Activated B cell treated with CpG ODN at 0.5 μM for 24 hours (primary cell): ENCODE measurements at regions of chr22 and their contacts with region 1.

Region 1: DNA sequence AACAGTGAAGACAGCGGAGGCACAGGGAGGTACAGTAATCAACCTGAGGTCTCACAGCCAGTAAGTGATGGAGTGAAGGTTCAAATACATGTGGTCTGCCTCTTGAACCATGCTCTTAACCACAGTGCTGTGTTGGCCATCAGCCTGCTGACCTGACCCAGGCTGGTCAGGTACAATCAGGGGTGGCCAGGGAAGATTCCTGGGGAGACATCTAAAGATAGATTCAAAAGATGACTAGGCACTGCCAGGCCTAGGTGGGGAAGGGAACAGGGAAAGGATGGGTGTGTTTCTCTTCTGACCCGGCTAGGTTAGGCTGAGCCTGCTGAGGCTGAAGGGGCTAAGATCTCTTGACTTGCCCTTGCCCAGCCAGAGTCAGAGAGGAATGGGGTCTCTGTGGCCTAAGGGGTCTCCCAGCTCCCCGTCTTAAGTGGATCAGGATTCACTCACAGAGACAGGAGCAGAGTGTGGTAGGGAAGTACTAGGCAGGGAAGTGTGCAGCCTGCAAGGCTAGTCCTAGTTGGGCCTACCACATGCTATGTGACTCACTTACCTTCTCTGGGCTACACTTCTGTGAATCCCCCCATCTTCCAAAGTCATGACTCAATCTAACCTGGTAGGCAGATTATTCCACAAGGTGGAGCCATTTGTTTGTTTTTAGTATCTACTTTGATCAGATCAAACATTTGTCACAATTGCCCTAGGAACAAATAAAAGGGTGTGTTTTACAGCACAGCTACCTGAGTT is 10.4 kb upstream of the SREBF2 start:
- DNase-seq: no peak
- ATAC-seq: peak; percentile 90
- H3K4me3 Mint-ChIP-seq: no peak overlapping the region
- H3K27ac Mint-ChIP-seq: peak overlapping the region; percentile 26
- H3K4me1 Mint-ChIP-seq: peaks cover 5% of the 10 kb centered on the region
- H3K27me3 Mint-ChIP-seq: no peaks in the 10 kb centered on the region
- CTCF ChIP-seq: no peak

Region 2: DNA sequence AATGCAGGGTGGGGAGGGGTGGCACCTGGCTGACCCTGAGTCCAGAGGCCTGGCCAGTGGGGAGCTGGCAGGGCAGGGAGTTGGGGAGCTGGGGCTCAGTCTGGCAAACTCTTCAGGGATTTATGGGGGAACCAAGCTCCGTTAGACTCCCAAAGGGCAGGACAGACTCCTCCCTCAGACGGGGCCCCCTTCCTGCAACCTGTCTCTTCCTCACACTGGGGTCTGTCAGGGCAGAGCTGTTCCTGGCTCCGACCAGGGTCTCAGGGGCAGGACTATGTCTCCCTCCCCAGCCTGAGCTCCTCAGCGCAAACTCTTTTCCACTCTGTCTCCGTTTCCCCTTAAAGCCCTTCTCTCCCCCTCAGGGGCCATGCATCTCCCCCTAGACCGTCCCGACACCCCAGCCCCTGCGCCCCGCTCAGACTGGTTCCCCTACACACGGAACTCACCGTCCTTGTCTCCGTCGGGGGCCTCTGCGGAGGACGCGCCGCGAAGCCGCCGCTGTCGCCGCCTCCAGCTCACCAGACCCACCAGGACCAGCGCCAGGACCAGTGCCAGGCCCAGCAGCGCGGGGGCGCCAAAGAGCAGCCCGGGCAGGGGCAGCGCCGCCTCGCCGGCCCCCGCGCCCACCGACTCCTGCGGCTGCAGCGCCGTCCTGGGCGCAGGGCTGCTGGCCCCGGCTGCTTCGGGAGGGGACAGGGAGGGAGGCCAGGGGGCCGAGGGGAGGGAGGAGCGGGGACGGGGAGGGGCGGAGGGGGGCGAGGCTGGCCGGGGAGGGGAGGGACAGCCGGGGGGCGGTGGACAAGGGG is 103.4 kb after region 1 on chr22:
- CTCF ChIA-PET with region 1: no interaction called
- POLR2A ChIA-PET with region 1: interaction called, 141 read pairs
- intact Hi-C with region 1: no loop called
- DNase-seq: peak; percentile 90
- ATAC-seq: peak; percentile 45
- H3K4me3 Mint-ChIP-seq: peak overlapping the region; percentile 92
- H3K27ac Mint-ChIP-seq: peak overlapping the region; percentile 94
- H3K4me1 Mint-ChIP-seq: peaks cover 83% of the 10 kb centered on the region
- H3K27me3 Mint-ChIP-seq: no peaks in the 10 kb centered on the region
- CTCF ChIP-seq: peak; percentile 26

Region 3: DNA sequence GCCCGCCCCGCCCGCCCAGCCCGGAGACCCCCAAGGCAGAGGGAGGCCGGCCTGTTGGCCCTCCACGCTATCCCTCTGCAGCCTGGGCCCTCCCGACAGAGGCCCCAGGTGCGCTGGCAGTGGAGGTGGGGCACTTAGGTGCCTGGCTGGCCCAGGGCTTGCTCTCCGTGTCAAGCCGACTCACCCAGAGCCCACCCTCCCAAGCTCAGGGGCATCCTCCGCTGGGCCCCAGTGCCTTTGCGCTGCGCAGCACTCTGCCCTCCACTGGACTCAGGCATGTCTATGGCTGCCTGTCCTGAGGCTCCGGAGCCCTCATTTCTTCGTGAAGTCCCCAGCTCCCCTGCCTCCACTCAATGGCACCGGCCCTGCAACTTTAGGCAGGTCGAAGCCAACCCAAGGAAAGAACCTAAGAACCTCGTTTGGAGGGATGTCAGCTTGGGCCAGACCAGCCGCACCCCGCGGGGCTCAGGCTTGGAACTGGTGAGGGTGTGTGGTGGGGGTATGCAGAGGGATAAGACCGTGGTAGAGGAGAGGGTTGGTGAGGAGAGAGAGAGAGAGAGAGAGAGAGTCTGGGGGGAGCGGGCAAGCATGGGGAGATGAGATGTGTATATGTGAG is 135.6 kb after region 1 on chr22:
- CTCF ChIA-PET with region 1: no interaction called
- POLR2A ChIA-PET with region 1: interaction called, 4 read pairs
- intact Hi-C with region 1: loop called (anchors 1 kb)
- DNase-seq: no peak
- ATAC-seq: no peak
- H3K4me3 Mint-ChIP-seq: no peak overlapping the region
- H3K27ac Mint-ChIP-seq: no peak overlapping the region
- H3K4me1 Mint-ChIP-seq: peaks cover 15% of the 10 kb centered on the region
- H3K27me3 Mint-ChIP-seq: no peaks in the 10 kb centered on the region
- CTCF ChIP-seq: peak; percentile 12

Region 4: DNA sequence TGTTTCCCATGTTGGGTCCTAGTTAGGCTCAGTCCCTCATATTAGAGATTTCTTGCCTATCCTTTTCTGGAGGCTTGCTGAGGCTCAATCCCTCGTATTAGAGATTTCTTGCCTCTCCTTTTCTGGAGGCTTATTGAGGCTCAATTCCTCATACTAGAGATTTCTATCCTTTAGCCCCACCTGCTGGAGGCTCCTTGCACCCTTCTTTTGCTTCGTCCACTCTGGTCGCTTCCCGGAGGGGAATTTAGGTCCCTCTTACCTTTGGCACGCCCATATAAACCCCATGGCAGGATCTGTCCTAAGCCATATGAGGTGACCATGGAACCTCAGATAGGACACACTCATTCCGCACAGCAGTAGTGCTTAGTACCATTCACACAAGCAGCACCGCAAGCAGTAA is 292.2 kb after region 1 on chr22:
- CTCF ChIA-PET with region 1: no interaction called
- POLR2A ChIA-PET with region 1: no interaction called
- intact Hi-C with region 1: loop called (anchors 5 kb)
- DNase-seq: no peak
- ATAC-seq: no peak
- H3K4me3 Mint-ChIP-seq: no peak overlapping the region
- H3K27ac Mint-ChIP-seq: no peak overlapping the region
- H3K4me1 Mint-ChIP-seq: peaks cover 3% of the 10 kb centered on the region
- H3K27me3 Mint-ChIP-seq: no peaks in the 10 kb centered on the region
- CTCF ChIP-seq: no peak